CD8-positive, alpha-beta memory T cell (primary cell): ENCODE measurements at regions of chr3 and their contacts with region 1.

Region 1: DNA sequence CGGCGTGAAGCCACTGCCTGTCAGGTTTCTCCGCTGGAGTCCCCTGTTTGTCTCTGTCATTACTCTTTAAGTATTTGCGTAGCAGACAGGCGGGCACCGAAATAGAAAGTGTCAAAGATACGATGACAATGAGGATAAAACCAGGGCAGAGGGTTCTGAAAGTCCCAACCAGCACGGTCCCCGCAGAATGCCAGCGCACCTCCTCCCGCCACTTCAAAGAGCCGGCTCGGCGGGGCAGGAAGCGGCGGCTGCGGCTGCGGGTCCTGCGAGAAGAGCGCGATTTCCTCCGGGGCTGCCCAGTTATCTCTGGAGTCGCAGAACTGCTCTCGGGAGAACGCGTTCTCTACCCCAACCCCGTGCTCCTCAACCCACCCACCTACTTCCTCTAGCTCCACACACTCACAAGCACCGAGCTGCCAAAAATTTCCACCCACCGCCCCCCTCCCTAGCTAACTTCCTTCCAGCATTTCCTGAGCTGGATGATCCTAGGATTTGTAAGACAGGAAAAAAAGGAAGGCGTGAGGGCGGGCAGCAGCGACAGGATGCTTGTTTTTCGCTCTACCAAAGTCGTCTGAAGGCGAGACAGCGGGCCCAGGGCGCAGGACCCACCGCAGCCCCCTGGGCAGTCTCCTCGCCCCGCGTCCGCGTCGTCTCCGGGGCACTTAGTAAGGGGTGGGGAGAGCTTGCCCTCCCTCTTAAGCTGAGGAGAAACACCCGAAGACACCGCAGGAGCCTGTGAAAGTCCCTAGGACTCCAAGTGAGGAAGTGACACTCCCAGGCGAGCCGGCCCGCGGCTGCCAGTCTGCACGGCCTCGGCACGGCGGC is at the start of gene ARHGAP31:
- DNase-seq: peak; percentile 83 to 97 (median 91)
- H3K4me3 ChIP-seq: peak within 1 kb of the TSS; percentile 86
- H3K4me3 Mint-ChIP-seq: peak within 1 kb of the TSS; percentile 90 to 96 (median 94)
- H3K27ac ChIP-seq: peak within 1 kb of the TSS; percentile 88
- H3K27ac Mint-ChIP-seq: peak within 1 kb of the TSS; percentile 95 to 100 (median 98)
- H3K4me1 ChIP-seq: peaks cover 32% of the 10 kb centered on the region
- H3K4me1 Mint-ChIP-seq: peaks cover 47 to 62% (median 52%) of the 10 kb centered on the region in 3 donors
- H3K27me3 ChIP-seq: no peaks in the 10 kb centered on the region
- H3K27me3 Mint-ChIP-seq: peaks cover 0 to 6% of the 10 kb centered on the region in 2 donors
- total RNA-seq, gene ARHGAP31: 24.2 to 25.8 TPM

Region 2: GRCh38 chr3:119098619-119099222 is 195.4 kb before region 1 on chr3:
- CTCF ChIA-PET with region 1: no interaction called
- POLR2A ChIA-PET with region 1: no interaction called
- DNase-seq: peak in 2 of 5 donors; percentile 11 to 48
- H3K4me3 ChIP-seq: no peak overlapping the region
- H3K4me3 Mint-ChIP-seq: no peak overlapping the region
- H3K27ac ChIP-seq: no peak overlapping the region
- H3K27ac Mint-ChIP-seq: no peak overlapping the region
- H3K4me1 ChIP-seq: no peaks in the 10 kb centered on the region
- H3K4me1 Mint-ChIP-seq: no peaks in the 10 kb centered on the region
- H3K27me3 ChIP-seq: no peaks in the 10 kb centered on the region
- H3K27me3 Mint-ChIP-seq: no peaks in the 10 kb centered on the region

Region 3: DNA sequence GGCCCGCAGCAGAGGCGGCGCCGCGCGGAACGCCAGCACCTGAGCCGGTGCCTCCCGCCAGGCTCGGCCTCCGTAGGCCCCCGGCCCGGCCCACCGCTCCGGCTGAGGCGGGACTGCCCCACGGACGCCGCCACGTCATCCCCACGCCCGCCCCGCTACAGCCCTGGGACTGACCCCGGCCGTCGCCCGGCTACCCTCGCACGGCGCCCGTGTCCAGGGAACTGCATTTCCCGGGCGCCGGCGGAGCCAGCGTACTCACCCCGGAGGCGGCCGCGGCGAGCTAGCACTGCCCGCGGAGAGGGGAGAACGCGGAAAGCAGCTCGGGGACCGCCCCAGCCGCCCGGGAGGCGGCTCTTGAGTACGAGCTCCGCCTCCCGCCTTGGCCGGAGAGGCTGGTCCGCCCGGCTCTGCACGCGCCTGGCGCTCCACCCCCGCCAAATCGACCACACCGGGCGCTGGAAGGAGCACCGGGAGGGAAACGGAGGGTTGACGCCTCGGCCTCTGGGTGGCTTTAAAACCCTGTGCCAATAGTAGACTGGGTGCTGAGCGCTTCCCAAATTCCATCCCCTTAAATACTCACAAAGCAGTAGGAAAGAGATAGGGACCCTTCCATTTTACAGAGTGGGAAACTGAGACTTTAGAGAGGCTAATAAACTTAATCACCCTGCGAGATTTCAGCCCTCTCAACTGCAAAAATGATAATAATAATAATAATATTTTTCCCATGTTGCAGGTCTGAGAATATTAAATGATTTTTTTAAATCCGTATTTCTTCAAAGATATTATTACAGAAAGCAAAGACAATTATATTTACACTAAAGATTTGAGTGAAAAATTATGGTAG is 53.3 kb before region 1 on chr3 and contains the start of gene B4GALT4:
- CTCF ChIA-PET with region 1: interaction called, 18 read pairs
- POLR2A ChIA-PET with region 1: interaction called, 13 read pairs
- DNase-seq: peak; percentile 57 to 75 (median 67)
- H3K4me3 ChIP-seq: peak within 1 kb of the TSS; percentile 69
- H3K4me3 Mint-ChIP-seq: peak within 1 kb of the TSS; percentile 70 to 93 (median 83)
- H3K27ac ChIP-seq: peak within 1 kb of the TSS; percentile 75
- H3K27ac Mint-ChIP-seq: peak within 1 kb of the TSS; percentile 70 to 96 (median 92)
- H3K4me1 ChIP-seq: peaks cover 38% of the 10 kb centered on the region
- H3K4me1 Mint-ChIP-seq: peaks cover 43 to 51% (median 48%) of the 10 kb centered on the region in 3 donors
- H3K27me3 ChIP-seq: no peaks in the 10 kb centered on the region
- H3K27me3 Mint-ChIP-seq: peaks cover under 1 to 2% of the 10 kb centered on the region in 2 donors
- total RNA-seq, gene B4GALT4: 17.9 to 18.0 TPM

Region 4: GRCh38 chr3:119322835-119323722 is 29.0 kb after region 1 on chr3:
- CTCF ChIA-PET with region 1: interaction called, 10 read pairs
- POLR2A ChIA-PET with region 1: interaction called, 19 read pairs
- DNase-seq: peak; percentile 81 to 91 (median 89)
- H3K4me3 ChIP-seq: peak overlapping the region; percentile 46
- H3K4me3 Mint-ChIP-seq: peak overlapping the region; percentile 85 to 97 (median 90)
- H3K27ac ChIP-seq: peak overlapping the region; percentile 72
- H3K27ac Mint-ChIP-seq: peak overlapping the region; percentile 93 to 99 (median 98)
- H3K4me1 ChIP-seq: peaks cover 16% of the 10 kb centered on the region
- H3K4me1 Mint-ChIP-seq: peaks cover 17 to 26% (median 25%) of the 10 kb centered on the region in 3 donors
- H3K27me3 ChIP-seq: no peaks in the 10 kb centered on the region
- H3K27me3 Mint-ChIP-seq: no peaks in the 10 kb centered on the region

Region 5: GRCh38 chr3:119401503-119402372 is 107.7 kb after region 1 on chr3:
- CTCF ChIA-PET with region 1: no interaction called
- POLR2A ChIA-PET with region 1: no interaction called
- DNase-seq: no peak
- H3K4me3 ChIP-seq: no peak overlapping the region
- H3K4me3 Mint-ChIP-seq: no peak overlapping the region
- H3K27ac ChIP-seq: no peak overlapping the region
- H3K27ac Mint-ChIP-seq: no peak overlapping the region
- H3K4me1 ChIP-seq: no peaks in the 10 kb centered on the region
- H3K4me1 Mint-ChIP-seq: no peaks in the 10 kb centered on the region
- H3K27me3 ChIP-seq: no peaks in the 10 kb centered on the region
- H3K27me3 Mint-ChIP-seq: no peaks in the 10 kb centered on the region

Region 6: GRCh38 chr3:119463171-119464169 is 169.4 kb after region 1 on chr3 and contains the start of gene TMEM39A:
- CTCF ChIA-PET with region 1: no interaction called
- POLR2A ChIA-PET with region 1: interaction called, 14 read pairs
- DNase-seq: peak; percentile 99
- H3K4me3 ChIP-seq: peak within 1 kb of the TSS; percentile 97
- H3K4me3 Mint-ChIP-seq: peak within 1 kb of the TSS; percentile 80 to 94 (median 89)
- H3K27ac ChIP-seq: peak within 1 kb of the TSS; percentile 91
- H3K27ac Mint-ChIP-seq: peak within 1 kb of the TSS; percentile 95 to 99 (median 98)
- H3K4me1 ChIP-seq: peaks cover 31% of the 10 kb centered on the region
- H3K4me1 Mint-ChIP-seq: peaks cover 30 to 66% (median 54%) of the 10 kb centered on the region in 3 donors
- H3K27me3 ChIP-seq: no peaks in the 10 kb centered on the region
- H3K27me3 Mint-ChIP-seq: peaks cover 0 to 4% of the 10 kb centered on the region in 2 donors
- total RNA-seq, gene TMEM39A: 44.4 to 45.3 TPM

Region 7: DNA sequence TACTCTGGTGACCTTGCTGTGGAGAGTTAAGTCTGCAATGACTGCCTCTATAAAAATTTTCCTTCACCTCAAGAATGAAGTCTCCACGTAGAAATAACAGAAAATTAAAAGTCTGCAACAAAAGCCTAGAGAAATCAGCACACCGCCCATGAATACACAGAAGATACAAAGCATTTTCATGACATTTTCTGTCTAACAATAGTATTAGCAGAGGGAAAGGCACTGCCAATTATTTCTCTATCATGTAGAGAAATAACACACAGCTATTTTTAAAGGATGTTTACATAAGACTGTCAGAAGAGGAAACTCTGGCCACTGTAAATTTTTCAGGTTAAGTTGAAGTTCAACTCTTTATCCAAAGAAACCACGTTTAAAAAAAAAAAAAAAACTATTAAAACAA is 719.4 kb after region 1 on chr3:
- CTCF ChIA-PET with region 1: no interaction called
- POLR2A ChIA-PET with region 1: no interaction called
- DNase-seq: no peak
- H3K4me3 ChIP-seq: no peak overlapping the region
- H3K4me3 Mint-ChIP-seq: peak overlapping the region in 1 of 7 donors; percentile 2
- H3K27ac ChIP-seq: no peak overlapping the region
- H3K27ac Mint-ChIP-seq: no peak overlapping the region
- H3K4me1 ChIP-seq: peaks cover 16% of the 10 kb centered on the region
- H3K4me1 Mint-ChIP-seq: peaks cover 70 to 87% (median 85%) of the 10 kb centered on the region in 3 donors
- H3K27me3 ChIP-seq: no peaks in the 10 kb centered on the region
- H3K27me3 Mint-ChIP-seq: no peaks in the 10 kb centered on the region